ENCODE measurements at regions of chr1 and their contacts with region 1.

Region 1: GRCh38 chr1:24415334-24415909 is at the start of gene NIPAL3:
- DNase-seq: peak; percentile 100
- H3K4me3 Mint-ChIP-seq: peak within 1 kb of the TSS; percentile 94
- H3K27ac Mint-ChIP-seq: peak within 1 kb of the TSS; percentile 94
- H3K4me1 Mint-ChIP-seq: peaks cover 56% of the 10 kb centered on the region
- H3K27me3 Mint-ChIP-seq: no peaks in the 10 kb centered on the region
- total RNA-seq, gene NIPAL3: 58.1 to 59.2 TPM

Region 2: DNA sequence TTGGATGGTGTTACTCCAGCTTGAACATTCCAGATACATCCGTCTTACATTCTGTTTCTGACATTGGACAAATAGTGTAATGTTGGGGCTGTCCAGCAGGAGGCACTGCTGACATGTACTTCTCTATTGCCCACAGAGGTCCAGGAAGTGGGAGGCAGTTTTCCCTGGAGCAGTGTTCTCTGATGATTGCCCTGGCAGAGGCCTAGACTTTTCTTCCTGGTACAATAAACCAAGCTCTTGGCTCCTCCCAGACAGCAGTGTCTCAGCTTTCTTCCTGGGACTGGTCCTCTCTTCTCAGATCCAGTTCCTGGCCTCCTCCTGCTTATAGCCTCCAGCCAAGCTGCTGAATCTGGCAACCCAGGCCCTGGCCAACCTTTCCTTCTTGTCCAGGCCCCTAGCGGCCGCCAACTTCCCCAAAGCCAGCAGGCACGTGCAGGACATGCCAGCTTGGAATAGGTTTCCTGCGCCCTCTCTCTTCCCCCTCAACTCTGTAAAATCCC is 213.4 kb before region 1 on chr1:
- CTCF ChIA-PET with region 1: interaction called, 21 read pairs
- intact Hi-C with region 1: no loop called
- DNase-seq: peak; percentile 79
- H3K4me3 Mint-ChIP-seq: no peak overlapping the region
- H3K27ac Mint-ChIP-seq: no peak overlapping the region
- H3K4me1 Mint-ChIP-seq: peaks cover 13% of the 10 kb centered on the region
- H3K27me3 Mint-ChIP-seq: no peaks in the 10 kb centered on the region

Region 3: DNA sequence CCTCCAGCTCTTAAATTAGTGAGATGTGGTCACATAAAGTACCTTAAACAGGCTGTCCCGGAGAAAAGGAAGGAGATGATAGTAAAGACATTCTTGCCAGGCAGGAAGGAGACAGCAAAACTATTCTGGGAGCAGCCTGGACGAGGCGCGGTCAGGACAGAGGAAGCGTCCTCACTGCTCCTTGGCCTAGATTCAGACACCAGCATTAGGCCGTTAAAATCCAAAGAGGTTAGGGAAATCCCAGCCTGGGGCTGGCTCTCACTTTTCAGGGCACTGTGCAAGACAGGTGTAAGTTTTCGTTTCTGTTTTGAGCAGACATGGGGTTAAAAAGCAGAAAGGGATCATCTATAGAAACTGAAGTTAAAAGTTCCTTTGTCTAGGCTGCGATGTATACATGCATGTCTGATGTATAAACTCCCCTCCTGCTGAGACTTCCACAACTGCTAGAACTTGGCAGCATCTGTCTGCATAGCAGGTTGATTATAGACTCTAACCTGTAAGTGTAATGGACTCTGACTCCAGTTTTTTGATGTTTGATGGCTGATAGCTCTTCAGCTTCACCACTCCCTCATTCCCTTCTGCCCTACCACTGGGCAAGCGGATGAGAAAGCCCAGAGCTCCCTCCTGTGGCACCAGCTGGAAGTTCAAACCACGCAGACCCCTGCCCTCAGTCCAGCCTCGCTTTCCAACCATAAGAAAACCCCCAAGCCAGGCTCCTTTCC is 23.4 kb before region 1 on chr1:
- CTCF ChIA-PET with region 1: interaction called, 37 read pairs
- intact Hi-C with region 1: loop called (anchors 1 kb)
- DNase-seq: peak; percentile 80
- H3K4me3 Mint-ChIP-seq: peak overlapping the region; percentile 60
- H3K27ac Mint-ChIP-seq: peak overlapping the region; percentile 86
- H3K4me1 Mint-ChIP-seq: peaks cover 47% of the 10 kb centered on the region
- H3K27me3 Mint-ChIP-seq: no peaks in the 10 kb centered on the region

Region 4: GRCh38 chr1:24502709-24503058 is 87.3 kb after region 1 on chr1 and contains the start of gene RCAN3:
- CTCF ChIA-PET with region 1: interaction called, 43 read pairs
- intact Hi-C with region 1: loop called (anchors 1 kb)
- DNase-seq: peak; percentile 87
- H3K4me3 Mint-ChIP-seq: peak within 1 kb of the TSS; percentile 100
- H3K27ac Mint-ChIP-seq: peak within 1 kb of the TSS; percentile 93
- H3K4me1 Mint-ChIP-seq: peaks cover 49% of the 10 kb centered on the region
- H3K27me3 Mint-ChIP-seq: no peaks in the 10 kb centered on the region
- total RNA-seq, gene RCAN3: 70.8 to 71.9 TPM

Region 5: GRCh38 chr1:24536391-24536840 is 121.0 kb after region 1 on chr1:
- CTCF ChIA-PET with region 1: interaction called, 16 read pairs
- intact Hi-C with region 1: loop called (anchors 1 kb)
- DNase-seq: peak; percentile 84
- H3K4me3 Mint-ChIP-seq: peak overlapping the region; percentile 67
- H3K27ac Mint-ChIP-seq: peak overlapping the region; percentile 97
- H3K4me1 Mint-ChIP-seq: peaks cover 84% of the 10 kb centered on the region
- H3K27me3 Mint-ChIP-seq: no peaks in the 10 kb centered on the region

Region 6: DNA sequence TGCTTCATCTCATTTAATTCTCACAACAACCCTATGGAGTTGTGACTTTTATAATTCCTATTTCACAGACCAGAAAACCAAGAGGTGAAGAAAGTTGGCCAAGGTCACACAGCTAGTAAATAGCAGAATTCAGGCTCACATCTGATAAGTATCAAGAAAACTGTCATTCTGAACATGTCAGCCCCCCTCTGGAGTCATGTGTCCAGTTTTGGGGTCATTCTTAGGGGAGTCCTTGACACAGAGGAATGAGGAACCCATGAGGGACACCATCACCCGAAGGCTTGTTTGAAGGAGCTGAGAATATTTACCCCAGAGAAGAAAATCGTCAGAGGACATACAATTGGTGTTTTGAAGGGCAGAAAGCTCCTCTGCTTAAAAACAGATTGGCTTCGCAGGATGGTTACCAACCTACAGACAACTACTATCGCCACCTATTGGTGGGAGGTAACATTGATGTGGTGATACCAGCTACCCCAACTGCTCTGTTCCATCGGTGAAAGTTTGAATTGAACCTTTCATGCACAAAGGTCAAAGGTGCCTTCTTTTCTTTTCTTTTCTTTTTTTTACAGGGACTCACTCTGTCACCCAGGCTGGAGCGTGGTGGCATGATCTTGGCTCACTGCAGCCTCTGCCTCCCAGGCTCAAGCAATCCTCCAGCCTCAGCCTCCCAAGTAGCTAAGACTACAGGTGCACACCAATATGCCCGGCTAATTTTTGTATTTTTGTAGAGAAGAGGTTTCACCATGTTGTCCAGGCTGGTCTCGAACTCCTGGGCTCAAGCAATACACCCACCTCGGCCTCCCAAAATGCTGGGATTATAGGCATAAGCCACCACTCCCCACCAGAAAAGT is 171.8 kb after region 1 on chr1:
- CTCF ChIA-PET with region 1: interaction called, 39 read pairs
- intact Hi-C with region 1: loop called (anchors 1 kb)
- DNase-seq: peak; percentile 71
- H3K4me3 Mint-ChIP-seq: peak overlapping the region; percentile 24
- H3K27ac Mint-ChIP-seq: peak overlapping the region; percentile 72
- H3K4me1 Mint-ChIP-seq: peaks cover 5% of the 10 kb centered on the region
- H3K27me3 Mint-ChIP-seq: no peaks in the 10 kb centered on the region

Region 7: GRCh38 chr1:24642481-24643361 is 227.3 kb after region 1 on chr1 and contains the start of gene SRRM1:
- CTCF ChIA-PET with region 1: interaction called, 3 read pairs
- intact Hi-C with region 1: loop called (anchors 2 kb)
- DNase-seq: peak; percentile 100
- H3K4me3 Mint-ChIP-seq: peak within 1 kb of the TSS; percentile 83
- H3K27ac Mint-ChIP-seq: peak within 1 kb of the TSS; percentile 98
- H3K4me1 Mint-ChIP-seq: peaks cover 48% of the 10 kb centered on the region
- H3K27me3 Mint-ChIP-seq: no peaks in the 10 kb centered on the region
- total RNA-seq, gene SRRM1: 226 to 235 TPM